Activated B cell treated with CpG ODN at 0.5 μM for 24 hours (primary cell): ENCODE measurements at regions of chr2 and their contacts with region 1.

Region 1: GRCh38 chr2:110677530-110678456 is at the start of gene BUB1:
- DNase-seq: peak; percentile 89
- ATAC-seq: peak; percentile 92
- H3K4me3 Mint-ChIP-seq: peak within 1 kb of the TSS; percentile 96
- H3K27ac Mint-ChIP-seq: peak within 1 kb of the TSS; percentile 97
- H3K4me1 Mint-ChIP-seq: peaks cover 34% of the 10 kb centered on the region
- H3K27me3 Mint-ChIP-seq: no peaks in the 10 kb centered on the region
- CTCF ChIP-seq: no peak
- total RNA-seq, gene BUB1: 5.9 and 6.2 TPM in 2 replicates

Region 2: DNA sequence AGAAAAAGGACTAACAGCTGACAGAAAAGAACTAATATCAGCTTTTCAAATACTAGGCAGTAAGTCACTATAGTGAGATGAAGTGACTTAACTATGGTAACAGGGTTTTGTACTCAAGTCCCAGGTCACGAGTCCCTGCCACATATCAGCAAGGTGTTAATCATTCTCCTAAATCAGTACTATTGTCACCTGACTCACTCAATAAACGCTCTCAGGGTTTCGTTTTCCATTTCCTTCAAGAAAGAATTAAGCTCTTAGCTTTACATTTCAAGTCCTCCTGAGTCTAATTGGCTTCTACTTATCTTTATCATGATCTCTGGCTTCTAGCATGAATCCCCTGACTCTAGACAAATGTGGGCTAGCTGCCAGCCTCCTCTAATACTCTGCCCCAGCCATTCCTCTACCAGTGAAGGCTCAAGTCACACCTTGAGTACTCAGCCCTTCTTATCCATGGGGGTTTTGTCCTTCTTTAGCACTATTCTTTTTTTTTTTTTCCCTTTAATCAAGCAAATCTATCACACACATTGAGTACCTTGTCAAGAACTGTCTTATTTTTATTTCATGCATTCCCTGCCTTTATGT is 20.0 kb before region 1 on chr2:
- CTCF ChIA-PET with region 1: no interaction called
- POLR2A ChIA-PET with region 1: no interaction called
- intact Hi-C with region 1: loop called (anchors 2 kb)
- DNase-seq: no peak
- ATAC-seq: no peak
- H3K4me3 Mint-ChIP-seq: no peak overlapping the region
- H3K27ac Mint-ChIP-seq: no peak overlapping the region
- H3K4me1 Mint-ChIP-seq: no peaks in the 10 kb centered on the region
- H3K27me3 Mint-ChIP-seq: no peaks in the 10 kb centered on the region
- CTCF ChIP-seq: no peak

Region 3: GRCh38 chr2:110804915-110805314 is 127.1 kb after region 1 on chr2:
- CTCF ChIA-PET with region 1: no interaction called
- POLR2A ChIA-PET with region 1: no interaction called
- intact Hi-C with region 1: loop called (anchors 5 kb)
- DNase-seq: peak; percentile 46
- ATAC-seq: peak; percentile 85
- H3K4me3 Mint-ChIP-seq: peak overlapping the region; percentile 47
- H3K27ac Mint-ChIP-seq: peak overlapping the region; percentile 67
- H3K4me1 Mint-ChIP-seq: peaks cover 31% of the 10 kb centered on the region
- H3K27me3 Mint-ChIP-seq: peaks cover 39% of the 10 kb centered on the region
- CTCF ChIP-seq: no peak